Activated T-helper 1 cell treated with anti-CD3 and anti-CD28 coated beads, Interleukin-12 subunit alpha, Interleukin-12 subunit beta, Interleukin-2, Interleukin-4 antibody, amounts not matched to agents 30 ng/mL and 10 ng/mL and 1 ng/mL, durations not matched to agents 14 hours and 24 hours and 36 hours (primary cell): ENCODE measurements at regions of chr2 and their contacts with region 1.

Region 1: GRCh38 chr2:74573747-74574562 is 19.4 kb downstream of the DOK1 start:
- DNase-seq: peak; percentile 31
- H3K4me3 Mint-ChIP-seq: peak overlapping the region; percentile 20
- H3K27ac Mint-ChIP-seq: peak overlapping the region; percentile 27
- H3K4me1 Mint-ChIP-seq: peaks cover 53% of the 10 kb centered on the region
- H3K27me3 Mint-ChIP-seq: no peaks in the 10 kb centered on the region

Region 2: GRCh38 chr2:73944714-73945113 is 629.2 kb before region 1 on chr2:
- intact Hi-C with region 1: loop called (anchors 5 kb)
- DNase-seq: no peak
- H3K4me3 Mint-ChIP-seq: peak overlapping the region; percentile 2
- H3K27ac Mint-ChIP-seq: peak overlapping the region; percentile 25
- H3K4me1 Mint-ChIP-seq: peaks cover 73% of the 10 kb centered on the region
- H3K27me3 Mint-ChIP-seq: no peaks in the 10 kb centered on the region

Region 3: DNA sequence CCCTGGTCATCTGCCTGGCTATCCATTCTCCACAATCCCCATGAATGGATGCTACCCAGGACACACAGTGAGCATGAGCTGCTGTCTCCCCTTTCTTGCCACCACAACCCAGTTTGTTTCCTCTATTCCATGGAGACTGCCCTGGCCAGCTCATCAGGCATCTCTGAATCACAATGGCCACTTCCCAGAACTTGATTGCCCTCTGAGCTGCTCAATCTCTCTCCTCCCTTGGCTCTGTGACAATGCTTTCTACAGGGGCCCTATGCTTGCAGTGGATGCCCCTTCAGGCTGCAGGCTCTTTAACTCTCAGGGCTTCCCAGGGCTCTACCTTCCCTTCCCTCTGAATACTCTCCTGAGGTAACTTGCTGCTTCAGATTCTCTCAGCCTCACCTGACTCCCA is 216.3 kb before region 1 on chr2:
- intact Hi-C with region 1: no loop called
- DNase-seq: no peak
- H3K4me3 Mint-ChIP-seq: no peak overlapping the region
- H3K27ac Mint-ChIP-seq: no peak overlapping the region
- H3K4me1 Mint-ChIP-seq: no peaks in the 10 kb centered on the region
- H3K27me3 Mint-ChIP-seq: no peaks in the 10 kb centered on the region

Region 4: GRCh38 chr2:74671479-74671878 is 97.5 kb after region 1 on chr2:
- intact Hi-C with region 1: no loop called
- DNase-seq: no peak
- H3K4me3 Mint-ChIP-seq: no peak overlapping the region
- H3K27ac Mint-ChIP-seq: no peak overlapping the region
- H3K4me1 Mint-ChIP-seq: no peaks in the 10 kb centered on the region
- H3K27me3 Mint-ChIP-seq: no peaks in the 10 kb centered on the region

Region 5: DNA sequence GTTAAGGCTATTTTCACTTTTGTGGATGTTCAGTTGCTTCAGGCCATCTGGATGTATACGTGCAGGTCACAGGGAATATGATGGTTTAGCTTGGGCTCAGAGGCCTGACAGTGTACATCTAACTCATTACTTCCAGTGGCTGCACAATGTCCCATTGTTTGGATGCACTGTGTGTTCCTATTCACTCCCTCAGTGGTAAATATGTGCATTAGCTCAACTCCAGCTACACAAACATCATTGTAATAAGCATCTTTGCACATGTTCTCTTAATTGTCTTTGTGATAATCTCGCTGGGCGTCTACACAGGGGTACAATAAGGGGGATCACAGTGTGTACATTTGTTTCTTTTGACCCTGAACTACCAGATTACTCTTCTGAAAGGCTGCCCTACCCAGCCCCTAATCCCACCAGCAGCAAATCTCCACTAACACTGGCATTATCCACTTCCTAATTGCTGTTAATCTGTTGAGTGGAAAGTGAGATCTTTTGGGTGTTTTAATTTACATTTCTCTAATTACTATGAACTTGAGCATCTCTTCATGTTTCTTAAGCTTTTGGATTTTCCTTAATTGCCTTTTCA is 328.4 kb after region 1 on chr2:
- intact Hi-C with region 1: no loop called
- DNase-seq: no peak
- H3K4me3 Mint-ChIP-seq: no peak overlapping the region
- H3K27ac Mint-ChIP-seq: no peak overlapping the region
- H3K4me1 Mint-ChIP-seq: no peaks in the 10 kb centered on the region
- H3K27me3 Mint-ChIP-seq: peaks cover 2% of the 10 kb centered on the region